Activated CD4-positive, alpha-beta T cell treated with anti-CD3 and anti-CD28 coated beads for 36 hours (primary cell): ENCODE measurements at regions of chr11 and their contacts with region 1.

Region 1: GRCh38 chr11:125625630-125626287 is 796 bp downstream of the CHEK1 start:
- DNase-seq: peak; percentile 92
- ATAC-seq: peak; percentile 88
- H3K4me3 Mint-ChIP-seq: peak overlapping the region; percentile 88
- H3K27ac Mint-ChIP-seq: peak overlapping the region; percentile 98
- H3K4me1 Mint-ChIP-seq: peaks cover 17% of the 10 kb centered on the region
- H3K27me3 Mint-ChIP-seq: no peaks in the 10 kb centered on the region

Region 2: DNA sequence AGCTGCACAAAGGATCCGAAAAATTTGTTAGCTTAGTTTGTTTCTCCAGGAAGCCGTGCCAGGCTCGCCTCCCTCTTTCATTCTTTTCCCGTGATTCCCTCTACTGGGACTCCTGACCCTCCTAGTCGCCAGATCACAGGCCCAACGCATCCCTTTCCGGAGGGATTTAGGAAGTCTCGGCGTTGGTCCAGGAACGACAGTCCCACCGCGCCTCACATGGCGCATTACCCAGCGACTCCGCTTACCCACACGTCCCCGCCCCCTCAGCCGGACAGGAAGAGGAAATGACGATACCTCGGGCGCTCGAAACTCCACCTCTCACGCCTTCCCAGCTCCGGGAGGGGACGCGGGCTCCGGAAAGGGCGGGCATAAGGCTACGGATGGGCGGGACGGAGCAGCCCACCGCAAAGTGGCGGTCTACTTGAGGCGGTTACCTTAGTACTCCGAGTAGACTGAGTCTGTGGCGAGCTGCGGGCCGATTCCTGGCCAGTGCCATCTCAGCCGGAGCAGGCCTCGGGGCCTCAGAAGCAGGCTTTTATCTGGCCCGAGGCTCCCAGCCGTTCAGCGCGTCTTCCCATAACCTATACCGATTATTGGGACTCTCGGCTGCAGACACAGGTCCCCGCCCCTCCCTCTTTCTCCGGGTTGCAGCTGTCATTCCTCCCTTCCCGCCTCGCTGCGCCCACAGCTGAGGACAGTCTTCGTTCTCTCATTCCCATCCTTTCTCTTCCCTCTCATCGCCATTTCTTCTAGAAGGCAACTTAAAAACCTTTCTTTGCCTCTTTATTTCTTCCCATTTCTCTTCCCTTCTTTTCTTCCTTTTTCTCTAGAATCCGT is 671.8 kb before region 1 on chr11 and contains the start of gene CCDC15:
- CTCF ChIA-PET with region 1: no interaction called
- POLR2A ChIA-PET with region 1: no interaction called
- intact Hi-C with region 1: loop called in 1 of 2 experiments (anchors 10 kb)
- DNase-seq: peak; percentile 97
- ATAC-seq: peak; percentile 98
- H3K4me3 Mint-ChIP-seq: no peak within 1 kb of the TSS
- H3K27ac Mint-ChIP-seq: no peak within 1 kb of the TSS
- H3K4me1 Mint-ChIP-seq: peaks cover 4% of the 10 kb centered on the region
- H3K27me3 Mint-ChIP-seq: no peaks in the 10 kb centered on the region
- total RNA-seq, gene CCDC15: 5.6 to 6.7 TPM

Region 3: DNA sequence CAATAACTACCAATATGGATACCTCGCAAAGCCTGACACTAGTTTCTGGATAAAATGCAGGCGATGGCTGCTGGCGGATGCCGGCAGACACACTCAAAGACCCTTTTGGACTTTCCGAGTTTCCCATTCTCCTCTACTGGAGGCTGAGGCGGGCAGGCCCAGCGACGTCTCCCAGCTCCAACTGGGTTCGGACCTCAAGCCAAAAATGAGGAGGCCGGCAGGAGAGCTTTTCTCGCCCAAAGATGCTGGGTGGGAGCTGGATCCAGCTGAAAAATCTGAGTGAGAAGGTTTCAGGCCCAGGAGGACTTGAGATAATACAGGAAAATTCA is 129.3 kb before region 1 on chr11:
- CTCF ChIA-PET with region 1: no interaction called
- POLR2A ChIA-PET with region 1: no interaction called
- intact Hi-C with region 1: loop called in 1 of 2 experiments (anchors 1 kb)
- DNase-seq: no peak
- ATAC-seq: no peak
- H3K4me3 Mint-ChIP-seq: peak overlapping the region; percentile 72
- H3K27ac Mint-ChIP-seq: no peak overlapping the region
- H3K4me1 Mint-ChIP-seq: peaks cover 21% of the 10 kb centered on the region
- H3K27me3 Mint-ChIP-seq: peaks cover 32% of the 10 kb centered on the region

Region 4: GRCh38 chr11:125514336-125515101 is 111.2 kb before region 1 on chr11:
- CTCF ChIA-PET with region 1: no interaction called
- POLR2A ChIA-PET with region 1: no interaction called
- intact Hi-C with region 1: loop called in 1 of 2 experiments (anchors 1 kb)
- DNase-seq: peak; percentile 78
- ATAC-seq: peak; percentile 86
- H3K4me3 Mint-ChIP-seq: peak overlapping the region; percentile 7
- H3K27ac Mint-ChIP-seq: peak overlapping the region; percentile 85
- H3K4me1 Mint-ChIP-seq: peaks cover 39% of the 10 kb centered on the region
- H3K27me3 Mint-ChIP-seq: no peaks in the 10 kb centered on the region

Region 5: GRCh38 chr11:125568970-125569914 is 56.5 kb before region 1 on chr11 and contains the start of gene EI24:
- CTCF ChIA-PET with region 1: interaction called, 11 read pairs
- POLR2A ChIA-PET with region 1: no interaction called
- intact Hi-C with region 1: loop called (anchors 1 kb)
- DNase-seq: peak; percentile 95
- ATAC-seq: peak; percentile 95
- H3K4me3 Mint-ChIP-seq: peak within 1 kb of the TSS; percentile 92
- H3K27ac Mint-ChIP-seq: peak within 1 kb of the TSS; percentile 93
- H3K4me1 Mint-ChIP-seq: peaks cover 24% of the 10 kb centered on the region
- H3K27me3 Mint-ChIP-seq: no peaks in the 10 kb centered on the region
- total RNA-seq, gene EI24: 36.3 to 36.6 TPM

Region 6: DNA sequence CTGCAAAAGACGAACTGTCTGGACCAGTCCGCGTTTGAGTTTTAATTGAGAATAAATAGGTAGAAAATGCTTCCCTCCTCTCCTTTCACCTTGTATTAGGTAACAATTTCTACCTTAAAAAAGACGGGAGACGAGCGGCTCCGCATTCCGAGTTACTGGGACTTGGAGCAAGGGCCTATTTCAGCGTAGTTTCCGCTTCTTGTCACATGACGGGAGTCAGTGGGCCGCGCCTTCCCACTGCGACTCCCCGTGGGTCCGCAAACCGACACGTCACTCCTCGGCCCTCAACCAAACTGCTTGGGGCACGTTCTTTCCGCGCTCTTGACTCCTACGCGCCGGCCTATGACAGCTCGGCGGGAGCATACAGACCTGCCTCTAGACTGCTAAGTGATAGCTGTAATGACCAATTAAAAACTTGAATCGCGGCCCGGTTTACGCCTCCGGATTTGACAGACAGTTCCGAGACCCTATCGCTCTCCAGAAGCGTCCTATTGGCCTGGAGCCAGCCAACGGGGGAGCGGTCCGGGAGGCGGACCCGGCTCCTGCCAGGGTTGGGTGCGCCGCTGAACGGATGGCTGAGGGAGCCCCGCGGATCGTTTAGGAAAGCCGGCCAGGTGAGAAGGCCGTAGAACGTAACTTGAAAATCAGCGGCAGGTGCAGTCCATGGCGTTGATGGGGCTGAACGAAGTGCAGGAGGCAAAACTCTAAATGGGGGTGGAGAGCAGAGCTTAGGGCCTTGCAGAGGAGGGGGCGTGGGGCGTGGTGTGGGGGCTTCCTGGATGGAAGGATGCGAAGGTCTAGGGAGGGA is 33.2 kb before region 1 on chr11 and contains the start of gene STT3A:
- CTCF ChIA-PET with region 1: interaction called, 7 read pairs
- POLR2A ChIA-PET with region 1: interaction called, 18 read pairs
- intact Hi-C with region 1: loop called (anchors 1 kb)
- DNase-seq: peak; percentile 99
- ATAC-seq: peak; percentile 93
- H3K4me3 Mint-ChIP-seq: peak within 1 kb of the TSS; percentile 97
- H3K27ac Mint-ChIP-seq: peak within 1 kb of the TSS; percentile 95
- H3K4me1 Mint-ChIP-seq: peaks cover 48% of the 10 kb centered on the region
- H3K27me3 Mint-ChIP-seq: no peaks in the 10 kb centered on the region
- total RNA-seq, gene STT3A: 127 to 128 TPM

Region 7: GRCh38 chr11:125874556-125875124 is 248.9 kb after region 1 on chr11:
- CTCF ChIA-PET with region 1: no interaction called
- POLR2A ChIA-PET with region 1: no interaction called
- intact Hi-C with region 1: loop called (anchors 1 to 2 kb)
- DNase-seq: peak; percentile 70
- ATAC-seq: peak; percentile 85
- H3K4me3 Mint-ChIP-seq: no peak overlapping the region
- H3K27ac Mint-ChIP-seq: no peak overlapping the region
- H3K4me1 Mint-ChIP-seq: no peaks in the 10 kb centered on the region
- H3K27me3 Mint-ChIP-seq: peaks cover 2% of the 10 kb centered on the region